BJ (cell line): ENCODE measurements at regions of chr1 and their contacts with region 1.

Region 1: GRCh38 chr1:167442124-167442848 is 76.0 kb downstream of the CD247 start:
- DNase-seq: no peak
- H3K4me3 ChIP-seq: no peak overlapping the region
- H3K27me3 ChIP-seq: peaks cover 17% of the 10 kb centered on the region
- CTCF ChIP-seq: peak; percentile 87

Region 2: DNA sequence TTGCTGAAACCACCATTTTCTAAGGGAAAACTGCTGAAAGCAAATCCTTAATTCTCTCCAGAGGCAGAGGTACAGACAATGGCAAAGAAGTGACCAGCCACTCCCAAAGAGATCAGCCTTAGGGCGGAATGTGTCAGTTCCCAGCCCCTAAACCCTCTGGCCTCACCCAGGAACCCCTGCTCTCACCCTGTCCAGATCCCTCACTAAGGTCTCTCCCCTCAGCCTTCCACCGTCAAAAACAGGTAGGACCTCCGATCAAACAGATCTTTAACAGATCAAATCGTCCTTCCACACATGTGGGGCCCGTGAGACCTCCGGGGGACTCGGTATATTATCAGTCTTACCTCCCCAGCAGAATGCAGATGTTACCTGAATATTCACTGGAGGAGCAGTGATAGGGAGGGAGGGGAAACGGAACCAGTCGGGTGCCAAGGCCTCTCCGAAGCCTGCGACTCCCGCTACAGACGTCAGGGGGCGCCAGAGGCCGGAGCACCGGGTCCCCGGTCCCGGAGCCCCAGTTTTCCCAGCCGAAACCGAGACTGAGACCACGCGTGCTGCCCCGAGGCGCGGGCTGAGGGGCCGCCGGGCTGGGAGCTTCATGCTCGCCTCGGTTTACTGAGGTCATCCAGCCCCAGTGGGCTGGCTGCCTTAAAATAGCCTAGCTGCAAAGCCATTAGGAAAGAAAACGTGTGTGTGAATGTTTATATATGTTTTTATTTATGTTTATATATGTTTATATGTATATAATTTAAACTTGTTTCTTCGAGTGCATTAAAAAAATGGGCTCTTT is 375.8 kb before region 1 on chr1:
- CTCF ChIA-PET with region 1: interaction called, 10 read pairs
- POLR2A ChIA-PET with region 1: no interaction called
- DNase-seq: no peak
- H3K4me3 ChIP-seq: no peak overlapping the region
- H3K27me3 ChIP-seq: no peaks in the 10 kb centered on the region
- CTCF ChIP-seq: peak; percentile 96

Region 3: GRCh38 chr1:167263819-167264464 is 178.3 kb before region 1 on chr1:
- CTCF ChIA-PET with region 1: interaction called, 33 read pairs
- POLR2A ChIA-PET with region 1: no interaction called
- DNase-seq: no peak
- H3K4me3 ChIP-seq: no peak overlapping the region
- H3K27me3 ChIP-seq: no peaks in the 10 kb centered on the region
- CTCF ChIP-seq: no peak

Region 4: DNA sequence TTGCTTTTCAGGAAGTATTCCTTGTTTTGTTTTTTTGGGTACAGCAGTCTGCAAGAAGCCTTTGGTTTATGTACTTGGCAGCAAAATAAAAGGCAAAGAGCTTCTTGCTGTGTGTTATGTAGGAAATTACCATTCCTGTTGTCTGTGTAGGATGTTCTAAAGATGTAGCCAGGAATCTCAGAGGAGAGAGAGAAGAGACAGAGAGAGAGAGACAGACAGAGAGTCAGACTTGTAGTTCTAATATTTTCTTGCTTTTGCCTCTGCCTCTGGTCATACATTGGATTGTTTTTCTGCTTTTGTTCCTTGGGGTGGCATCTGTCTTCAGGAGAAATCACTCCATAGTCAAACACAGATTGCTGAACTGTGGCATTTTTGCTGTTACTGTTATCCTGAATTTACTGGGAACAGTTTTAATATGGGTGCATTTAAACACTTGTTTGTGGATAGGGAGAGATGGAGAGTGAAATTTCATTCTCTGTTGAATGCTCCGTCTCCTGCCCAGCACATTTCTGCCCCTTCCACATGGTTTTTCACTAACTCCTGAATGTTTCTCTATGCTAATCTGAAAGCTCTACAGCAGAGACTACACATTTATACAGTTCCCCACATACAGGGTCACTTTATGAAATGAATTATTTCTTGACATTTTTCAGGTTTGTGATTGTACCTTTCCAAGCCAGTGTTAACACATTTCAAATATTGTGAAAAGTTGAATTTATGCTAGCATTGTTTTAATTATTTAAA is 171.8 kb before region 1 on chr1:
- CTCF ChIA-PET with region 1: interaction called, 33 read pairs
- POLR2A ChIA-PET with region 1: no interaction called
- DNase-seq: no peak
- H3K4me3 ChIP-seq: no peak overlapping the region
- H3K27me3 ChIP-seq: no peaks in the 10 kb centered on the region
- CTCF ChIP-seq: no peak

Region 5: DNA sequence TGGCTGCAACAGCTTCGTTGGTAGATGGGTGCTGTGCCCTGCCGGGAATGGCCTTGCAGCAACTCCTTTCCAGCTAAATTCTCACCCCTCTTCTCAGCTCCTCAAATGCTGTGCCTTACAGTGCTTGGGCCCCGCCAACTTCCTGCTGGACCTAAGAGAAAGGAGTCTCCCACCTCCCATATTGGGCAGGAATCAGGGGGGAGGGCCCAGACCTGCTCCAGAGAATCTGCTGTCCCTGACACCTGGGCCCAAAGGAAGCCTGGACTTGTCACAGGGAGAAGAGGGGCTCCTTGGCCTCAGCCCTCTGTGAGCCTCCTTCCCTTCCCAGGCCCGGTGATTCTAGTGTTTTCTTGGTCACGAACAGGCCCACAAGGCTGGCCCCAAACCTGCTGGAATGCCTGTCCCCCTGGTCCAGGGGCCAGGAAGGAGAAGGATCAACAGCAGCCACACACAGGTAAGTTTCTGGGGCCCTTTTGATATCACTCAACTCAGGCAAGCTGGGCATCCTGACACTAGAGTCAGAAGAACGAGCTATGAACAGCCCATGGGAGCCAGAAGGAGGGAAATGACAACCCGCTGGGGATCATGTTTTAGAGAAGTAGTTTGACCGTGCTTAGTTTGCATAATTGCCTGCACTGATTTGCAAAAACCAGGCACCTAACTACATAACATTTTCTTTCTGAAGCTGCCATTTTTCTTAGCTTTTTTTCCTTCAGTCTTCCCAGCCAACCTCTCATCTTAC is 10.2 kb before region 1 on chr1:
- CTCF ChIA-PET with region 1: interaction called, 15 read pairs
- POLR2A ChIA-PET with region 1: no interaction called
- DNase-seq: no peak
- H3K4me3 ChIP-seq: no peak overlapping the region
- H3K27me3 ChIP-seq: no peaks in the 10 kb centered on the region
- CTCF ChIP-seq: no peak

Region 6: DNA sequence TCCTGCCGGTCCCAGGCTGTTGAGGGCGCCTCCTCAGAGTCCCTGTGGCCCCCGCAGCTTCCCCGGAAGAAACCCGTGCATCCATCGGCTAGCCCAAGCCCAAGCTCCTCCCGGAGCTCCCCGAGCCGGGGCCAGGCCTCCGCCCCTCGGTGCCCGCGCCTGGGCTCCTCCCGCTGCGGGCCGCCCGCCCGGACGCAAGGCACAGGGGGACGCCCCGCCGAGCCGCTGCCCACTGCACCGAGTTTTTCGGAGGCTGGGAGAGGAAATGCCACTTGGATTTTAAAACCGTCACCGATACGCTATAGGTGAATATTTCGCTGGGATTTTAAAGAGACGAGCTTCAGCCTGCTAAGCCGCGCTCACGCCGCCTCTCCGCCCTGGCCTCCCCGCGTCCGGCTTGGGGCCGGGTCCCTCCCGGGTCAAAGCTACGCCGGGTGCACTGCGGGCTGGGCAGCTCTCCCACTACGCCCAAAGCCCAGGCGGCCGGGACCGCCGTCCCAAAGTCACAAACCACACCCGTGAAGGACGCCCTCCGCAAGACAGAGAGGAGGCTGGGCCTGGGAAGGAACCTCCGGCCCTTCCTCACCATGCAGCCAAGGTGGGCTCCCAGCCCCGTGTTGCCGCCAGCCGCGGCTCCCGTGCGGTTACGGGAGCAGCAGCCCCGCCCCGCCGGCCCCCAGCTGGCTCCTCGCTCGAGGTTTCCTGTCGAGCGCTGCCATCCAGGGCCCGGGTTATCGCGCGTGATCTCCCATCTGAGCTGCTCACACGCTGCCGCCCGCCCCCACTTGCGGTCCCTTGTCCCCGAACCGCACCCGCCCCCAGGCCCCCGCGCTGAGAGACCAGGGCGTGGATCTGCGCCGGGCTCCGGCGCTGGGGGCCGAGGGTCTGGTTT is 12.9 kb after region 1 on chr1:
- CTCF ChIA-PET with region 1: interaction called, 38 read pairs
- POLR2A ChIA-PET with region 1: no interaction called
- DNase-seq: no peak
- H3K4me3 ChIP-seq: peak overlapping the region; percentile 50
- H3K27me3 ChIP-seq: peaks cover 6% of the 10 kb centered on the region; the same call in 1 of the 2 replicates
- CTCF ChIP-seq: no peak